ENCODE measurements at regions of chr19 and their contacts with region 1.

Region 1: GRCh38 chr19:55146078-55146704 is 2.8 kb downstream of the TNNT1 start:
- DNase-seq: no peak
- H3K4me3 ChIP-seq: peak overlapping the region; percentile 1 to 62 (median 11)
- H3K4me3 Mint-ChIP-seq: peak overlapping the region; percentile 31 to 57
- H3K27ac ChIP-seq: no peak overlapping the region
- H3K27ac Mint-ChIP-seq: no peak overlapping the region
- H3K4me1 ChIP-seq: peaks cover 25 to 30% of the 10 kb centered on the region in 2 donors
- H3K4me1 Mint-ChIP-seq: peaks cover 26% of the 10 kb centered on the region
- H3K27me3 ChIP-seq: peaks cover 10 to 55% of the 10 kb centered on the region in 2 donors
- H3K27me3 Mint-ChIP-seq: peaks cover 63 to 82% (median 76%) of the 10 kb centered on the region in 3 donors
- CTCF ChIP-seq: peak; percentile 54

Region 2: GRCh38 chr19:54959840-54960239 is 186.4 kb before region 1 on chr19:
- intact Hi-C with region 1: no loop called
- DNase-seq: peak; percentile 15 to 35 (median 34)
- H3K4me3 ChIP-seq: peak overlapping the region in 1 of 3 experiments; percentile 53
- H3K4me3 Mint-ChIP-seq: peak overlapping the region; percentile 24 to 76
- H3K27ac ChIP-seq: no peak overlapping the region
- H3K27ac Mint-ChIP-seq: peak overlapping the region; percentile 21 to 95 (median 85)
- H3K4me1 ChIP-seq: peaks cover 20 to 21% of the 10 kb centered on the region in 2 donors
- H3K4me1 Mint-ChIP-seq: peaks cover 22% of the 10 kb centered on the region
- H3K27me3 ChIP-seq: no peaks in the 10 kb centered on the region
- H3K27me3 Mint-ChIP-seq: peaks cover 11 to 18% (median 17%) of the 10 kb centered on the region in 3 donors
- CTCF ChIP-seq: no peak

Region 3: DNA sequence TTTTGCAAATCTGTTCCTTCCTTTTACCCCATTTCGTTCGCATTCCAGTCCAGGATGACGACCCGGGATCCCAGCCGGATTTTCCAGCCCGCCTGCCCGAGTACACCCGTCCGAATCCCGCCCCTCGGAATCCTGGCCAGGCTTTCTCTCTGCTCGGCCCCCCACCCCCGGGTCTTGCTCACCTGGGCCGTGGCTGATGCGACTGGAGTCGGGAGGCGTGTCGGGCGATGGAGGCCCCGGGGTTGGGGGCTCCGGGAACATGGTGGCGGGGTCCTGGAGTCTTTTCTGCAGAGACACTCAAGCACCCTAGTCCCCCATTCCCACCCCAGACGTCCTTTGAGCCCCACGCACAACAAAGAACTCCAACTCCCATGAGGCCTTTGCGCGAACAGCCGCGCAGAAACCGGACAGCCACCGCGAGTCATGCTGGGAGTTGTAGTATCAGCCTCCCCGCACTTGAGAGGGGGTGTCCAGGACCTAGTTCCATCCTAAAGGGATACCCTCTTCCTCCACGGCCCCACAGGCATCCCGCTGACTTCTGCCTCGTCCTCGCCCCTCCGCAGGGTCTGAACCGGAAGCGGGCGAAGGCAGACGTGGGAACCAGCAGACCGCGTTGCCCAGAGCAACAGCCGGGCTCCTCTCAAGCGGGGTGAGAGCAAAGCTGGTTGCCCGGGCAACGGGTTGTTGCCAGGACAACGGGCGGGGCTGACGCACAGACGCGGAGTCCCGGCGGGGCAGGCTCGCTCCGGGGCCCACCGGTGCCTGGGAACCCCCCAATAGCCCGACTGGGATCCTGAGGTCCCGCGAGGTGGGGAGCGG is 32.8 kb after region 1 on chr19:
- intact Hi-C with region 1: no loop called
- DNase-seq: peak; percentile 42 to 63 (median 49)
- H3K4me3 ChIP-seq: peak overlapping the region in 1 of 3 experiments; percentile 45
- H3K4me3 Mint-ChIP-seq: peak overlapping the region; percentile 24 to 76
- H3K27ac ChIP-seq: no peak overlapping the region
- H3K27ac Mint-ChIP-seq: peak overlapping the region in 2 of 7 donors; percentile 36 to 49
- H3K4me1 ChIP-seq: peaks cover 14 to 21% of the 10 kb centered on the region in 2 donors
- H3K4me1 Mint-ChIP-seq: peaks cover 18% of the 10 kb centered on the region
- H3K27me3 ChIP-seq: peaks cover 24 to 81% of the 10 kb centered on the region in 2 donors
- H3K27me3 Mint-ChIP-seq: peaks cover 78 to 88% (median 83%) of the 10 kb centered on the region in 3 donors
- CTCF ChIP-seq: no peak

Region 4: DNA sequence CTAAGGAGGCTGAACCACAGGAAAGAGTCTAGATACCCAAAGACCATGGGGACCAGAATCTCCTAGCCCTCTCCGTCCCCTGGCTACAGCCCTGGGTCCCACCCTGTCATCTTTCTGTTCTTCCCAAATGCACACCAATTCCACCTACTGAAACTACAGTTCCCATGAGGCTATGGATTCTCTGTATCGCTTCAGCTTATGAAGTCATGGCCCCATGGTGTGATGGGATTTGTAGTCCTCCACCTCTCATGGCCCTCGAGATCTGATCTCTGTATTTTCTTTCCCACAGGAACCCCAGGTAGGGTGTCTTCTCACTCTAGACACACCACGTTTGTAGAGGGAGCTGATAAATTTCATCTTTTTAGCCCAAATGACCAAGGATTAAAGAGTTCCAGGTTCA is 51.3 kb after region 1 on chr19:
- intact Hi-C with region 1: no loop called
- DNase-seq: no peak
- H3K4me3 ChIP-seq: no peak overlapping the region
- H3K4me3 Mint-ChIP-seq: no peak overlapping the region
- H3K27ac ChIP-seq: no peak overlapping the region
- H3K27ac Mint-ChIP-seq: no peak overlapping the region
- H3K4me1 ChIP-seq: no peaks in the 10 kb centered on the region
- H3K4me1 Mint-ChIP-seq: peaks cover 6% of the 10 kb centered on the region
- H3K27me3 ChIP-seq: no peaks in the 10 kb centered on the region
- H3K27me3 Mint-ChIP-seq: peaks cover 7 to 32% (median 17%) of the 10 kb centered on the region in 3 donors
- CTCF ChIP-seq: no peak

Region 5: GRCh38 chr19:55418185-55418584 is 272.0 kb after region 1 on chr19:
- intact Hi-C with region 1: loop called (anchors 5 to 10 kb)
- DNase-seq: peak in 2 of 3 donors; percentile 43 to 60
- H3K4me3 ChIP-seq: no peak overlapping the region
- H3K4me3 Mint-ChIP-seq: no peak overlapping the region
- H3K27ac ChIP-seq: no peak overlapping the region
- H3K27ac Mint-ChIP-seq: peak overlapping the region in 3 of 7 donors; percentile 11 to 68 (median 54)
- H3K4me1 ChIP-seq: peaks cover 8 to 11% of the 10 kb centered on the region in 2 donors
- H3K4me1 Mint-ChIP-seq: peaks cover 11% of the 10 kb centered on the region
- H3K27me3 ChIP-seq: no peaks in the 10 kb centered on the region
- H3K27me3 Mint-ChIP-seq: peaks cover 2 to 15% (median 6%) of the 10 kb centered on the region in 3 donors
- CTCF ChIP-seq: peak; percentile 72

Region 6: GRCh38 chr19:55426042-55426441 is 279.9 kb after region 1 on chr19:
- intact Hi-C with region 1: loop called in 1 of 2 experiments (anchors 10 kb)
- DNase-seq: no peak
- H3K4me3 ChIP-seq: no peak overlapping the region
- H3K4me3 Mint-ChIP-seq: no peak overlapping the region
- H3K27ac ChIP-seq: no peak overlapping the region
- H3K27ac Mint-ChIP-seq: no peak overlapping the region
- H3K4me1 ChIP-seq: no peaks in the 10 kb centered on the region
- H3K4me1 Mint-ChIP-seq: no peaks in the 10 kb centered on the region
- H3K27me3 ChIP-seq: no peaks in the 10 kb centered on the region
- H3K27me3 Mint-ChIP-seq: peaks cover 10 to 31% (median 14%) of the 10 kb centered on the region in 3 donors
- CTCF ChIP-seq: no peak

Region 7: DNA sequence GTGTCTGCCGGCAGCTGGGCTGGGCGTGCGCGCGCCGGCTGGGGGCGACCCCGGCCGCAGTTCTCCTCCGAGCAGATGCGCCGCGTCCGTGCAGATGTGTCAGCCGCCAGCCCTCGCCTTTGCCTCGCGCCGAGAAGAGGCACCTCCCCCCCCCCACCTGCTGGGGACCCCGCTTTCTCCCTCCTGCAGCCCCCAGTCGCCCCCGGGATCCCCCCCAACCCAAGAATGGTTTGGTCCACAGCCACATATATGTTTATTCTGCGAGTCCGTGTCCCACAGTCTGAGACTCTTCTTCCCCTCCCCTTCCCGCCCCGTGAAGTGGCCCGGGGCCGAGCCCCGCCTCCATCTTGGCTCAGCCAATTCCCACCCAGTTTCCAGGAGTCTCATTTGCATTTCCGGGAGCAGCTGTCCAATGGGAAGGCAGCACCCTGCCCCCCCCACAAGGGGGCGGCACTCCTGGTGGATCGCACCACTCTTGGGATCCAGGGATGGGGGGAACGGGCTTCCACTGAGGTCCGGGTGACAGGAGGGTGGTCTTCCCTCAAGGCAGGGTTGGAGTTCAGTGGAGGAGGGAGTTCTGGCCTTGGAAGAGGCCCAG is 306.7 kb after region 1 on chr19:
- intact Hi-C with region 1: loop called in 1 of 2 experiments (anchors 10 kb)
- DNase-seq: peak in 2 of 3 donors; percentile 24 to 38
- H3K4me3 ChIP-seq: no peak overlapping the region
- H3K4me3 Mint-ChIP-seq: peak overlapping the region in 1 of 2 donors; percentile 9
- H3K27ac ChIP-seq: no peak overlapping the region
- H3K27ac Mint-ChIP-seq: no peak overlapping the region
- H3K4me1 ChIP-seq: peaks cover 5 to 10% of the 10 kb centered on the region in 2 donors
- H3K4me1 Mint-ChIP-seq: peaks cover 6% of the 10 kb centered on the region
- H3K27me3 ChIP-seq: peaks cover 10 to 38% of the 10 kb centered on the region in 2 donors
- H3K27me3 Mint-ChIP-seq: peaks cover 27 to 36% (median 29%) of the 10 kb centered on the region in 3 donors
- CTCF ChIP-seq: no peak

Region 8: GRCh38 chr19:55503502-55504251 is 357.5 kb after region 1 on chr19:
- intact Hi-C with region 1: loop called (anchors 5 kb)
- DNase-seq: peak; percentile 91 to 93 (median 92)
- H3K4me3 ChIP-seq: peak overlapping the region; percentile 24 to 77 (median 51)
- H3K4me3 Mint-ChIP-seq: peak overlapping the region; percentile 80 to 90
- H3K27ac ChIP-seq: peak overlapping the region; percentile 28 to 48
- H3K27ac Mint-ChIP-seq: peak overlapping the region; percentile 2 to 89 (median 80)
- H3K4me1 ChIP-seq: peaks cover 5 to 11% of the 10 kb centered on the region in 2 donors
- H3K4me1 Mint-ChIP-seq: peaks cover 9% of the 10 kb centered on the region
- H3K27me3 ChIP-seq: peaks cover 0 to 3% of the 10 kb centered on the region in 2 donors
- H3K27me3 Mint-ChIP-seq: peaks cover 5 to 14% (median 11%) of the 10 kb centered on the region in 3 donors
- CTCF ChIP-seq: peak; percentile 100

Measured in CD14-positive monocyte (primary cell).